AG04449 (cell line): ENCODE measurements at regions of chr2 and their contacts with region 1.

Region 1: GRCh38 chr2:162318328-162319180 is at the start of gene IFIH1:
- DNase-seq: peak; percentile 34
- H3K4me3 ChIP-seq: peak within 1 kb of the TSS; percentile 70
- CTCF ChIP-seq: peak; percentile 58

Region 2: DNA sequence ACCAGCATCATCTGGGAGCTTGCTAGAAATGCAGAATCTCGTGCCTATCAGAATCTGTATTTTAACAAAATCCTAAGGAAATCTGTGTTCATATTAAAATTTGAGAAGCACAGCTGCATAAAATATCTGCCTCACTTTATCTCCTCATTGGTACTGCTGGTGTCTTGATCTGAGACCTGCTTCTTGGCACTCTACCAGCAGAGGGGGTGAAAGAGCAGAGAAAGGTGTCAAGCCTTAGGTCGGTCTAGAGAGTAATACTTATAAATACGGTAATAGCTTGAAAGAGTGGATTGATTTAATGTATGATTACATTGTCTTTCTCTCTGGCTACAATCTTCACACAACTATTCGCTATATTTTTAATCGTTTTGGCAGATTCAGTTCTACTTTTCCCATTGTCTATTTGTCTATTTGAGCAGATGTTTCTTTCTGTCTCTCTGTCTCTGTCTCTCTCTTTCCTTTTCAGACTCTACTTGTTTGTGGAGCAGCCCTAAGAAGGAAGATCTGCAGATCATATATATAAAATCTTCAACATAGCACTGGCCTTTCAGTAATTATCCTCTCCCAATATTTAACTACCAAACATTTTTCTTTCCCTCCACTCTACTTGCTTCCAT is 164.8 kb before region 1 on chr2:
- CTCF ChIA-PET with region 1: interaction called, 10 read pairs
- POLR2A ChIA-PET with region 1: no interaction called
- DNase-seq: no peak
- H3K4me3 ChIP-seq: no peak overlapping the region
- CTCF ChIP-seq: peak; percentile 70

Region 3: GRCh38 chr2:162333968-162334367 is 15.4 kb after region 1 on chr2:
- CTCF ChIA-PET with region 1: interaction called, 10 read pairs
- POLR2A ChIA-PET with region 1: no interaction called
- DNase-seq: no peak
- H3K4me3 ChIP-seq: no peak overlapping the region
- CTCF ChIP-seq: peak; percentile 46